Activated T-helper 2 cell treated with anti-CD3 and anti-CD28 coated beads, Interferon-gamma antibody, Interleukin-2, Interleukin-4, amounts not matched to agents 10 μg/mL and 5 μg/mL and 100 μg/mL, durations not matched to agents 14 hours and 24 hours and 36 hours (primary cell): ENCODE measurements at regions of chr20 and their contacts with region 1.

Region 1: GRCh38 chr20:62793912-62794724 is 2.2 kb upstream of the MRGBP start:
- DNase-seq: peak; percentile 97
- H3K4me3 Mint-ChIP-seq: peak overlapping the region; percentile 82
- H3K27ac Mint-ChIP-seq: peak overlapping the region; percentile 94
- H3K4me1 Mint-ChIP-seq: peaks cover 28% of the 10 kb centered on the region
- H3K27me3 Mint-ChIP-seq: no peaks in the 10 kb centered on the region

Region 2: DNA sequence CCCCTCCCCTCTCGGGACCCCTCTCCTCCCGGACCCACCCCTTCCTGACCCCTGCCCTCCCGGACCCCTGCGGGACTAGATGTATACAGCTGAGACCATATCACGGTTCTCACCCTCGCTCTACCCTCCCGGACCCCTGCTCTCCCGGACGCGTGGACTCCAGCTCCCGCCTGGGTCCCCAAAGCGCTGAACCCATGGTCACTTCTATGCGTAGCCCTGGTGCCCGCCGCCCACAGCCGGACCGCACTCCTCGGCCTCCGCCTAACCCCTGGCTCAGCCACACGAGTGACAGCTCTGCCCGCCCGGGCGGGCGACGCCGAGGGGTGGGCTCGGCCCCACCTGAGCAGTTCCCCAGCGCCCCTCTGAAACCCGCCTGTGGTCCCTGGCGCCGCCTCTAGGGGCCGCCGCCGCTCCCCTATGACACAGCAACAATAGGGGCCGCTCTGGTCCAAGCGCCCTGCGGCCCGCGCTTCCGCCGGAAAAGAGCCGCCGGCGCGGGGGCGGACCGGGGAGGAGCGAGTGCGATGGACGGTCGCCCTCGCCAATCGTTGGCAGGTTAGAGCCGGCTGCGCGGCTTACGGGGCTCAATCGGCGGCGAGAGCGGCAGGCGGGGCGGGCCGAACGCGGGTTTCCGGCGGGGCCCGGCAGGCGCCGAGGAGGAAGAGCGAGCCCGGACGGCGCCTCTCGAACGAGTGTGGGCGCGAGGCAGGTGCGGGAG is 491.6 kb before region 1 on chr20 and contains the start of gene ADRM1:
- intact Hi-C with region 1: loop called (anchors 5 kb)
- DNase-seq: peak; percentile 96
- H3K4me3 Mint-ChIP-seq: peak within 1 kb of the TSS; percentile 93
- H3K27ac Mint-ChIP-seq: peak within 1 kb of the TSS; percentile 99
- H3K4me1 Mint-ChIP-seq: peaks cover 13% of the 10 kb centered on the region
- H3K27me3 Mint-ChIP-seq: no peaks in the 10 kb centered on the region
- total RNA-seq, gene ADRM1: 152 and 171 TPM in 2 replicates

Region 3: DNA sequence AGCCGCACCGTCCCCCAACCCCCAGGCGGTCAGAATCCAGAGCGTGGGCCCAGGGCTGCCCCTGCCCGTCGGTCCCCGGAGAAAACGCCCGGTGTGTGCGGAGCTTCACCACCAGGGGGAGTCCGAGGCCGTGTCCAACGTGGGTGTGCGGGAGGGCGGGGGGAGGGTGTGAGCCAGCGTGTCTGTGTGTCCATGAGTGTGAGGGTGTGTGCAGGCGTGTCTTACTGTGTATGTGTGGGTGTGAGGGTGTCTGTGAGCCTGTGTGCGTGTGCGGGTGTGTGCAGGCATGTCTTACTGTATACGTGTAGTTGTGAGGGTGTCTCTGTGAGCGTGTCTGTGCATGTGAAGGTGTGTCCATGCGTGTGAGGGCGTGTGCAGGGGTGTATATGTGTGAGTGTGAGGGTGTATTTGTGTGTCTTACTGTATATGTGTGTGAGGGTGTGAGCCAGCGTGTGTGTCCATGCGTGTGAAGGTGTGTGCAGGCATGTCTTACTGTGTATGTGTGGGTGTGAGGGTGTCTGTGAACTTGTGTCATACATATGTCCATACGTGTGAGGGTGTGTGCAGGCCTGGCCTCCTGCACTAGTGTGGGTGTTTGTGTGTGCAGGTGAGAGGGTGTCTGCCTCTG is 293.8 kb before region 1 on chr20:
- intact Hi-C with region 1: loop called (anchors 1 kb)
- DNase-seq: peak; percentile 65
- H3K4me3 Mint-ChIP-seq: no peak overlapping the region
- H3K27ac Mint-ChIP-seq: peak overlapping the region; percentile 85
- H3K4me1 Mint-ChIP-seq: peaks cover 23% of the 10 kb centered on the region
- H3K27me3 Mint-ChIP-seq: no peaks in the 10 kb centered on the region

Region 4: GRCh38 chr20:62642040-62642665 is 152.0 kb before region 1 on chr20 and contains the start of gene SLCO4A1:
- intact Hi-C with region 1: loop called (anchors 2 kb)
- DNase-seq: peak; percentile 89
- H3K4me3 Mint-ChIP-seq: peak within 1 kb of the TSS; percentile 80
- H3K27ac Mint-ChIP-seq: peak within 1 kb of the TSS; percentile 74
- H3K4me1 Mint-ChIP-seq: peaks cover 23% of the 10 kb centered on the region
- H3K27me3 Mint-ChIP-seq: peaks cover 7% of the 10 kb centered on the region
- total RNA-seq, gene SLCO4A1: 59.2 and 61.1 TPM in 2 replicates

Region 5: GRCh38 chr20:62716198-62716940 is 77.7 kb before region 1 on chr20:
- intact Hi-C with region 1: loop called (anchors 1 kb)
- DNase-seq: peak; percentile 38
- H3K4me3 Mint-ChIP-seq: peak overlapping the region; percentile 6
- H3K27ac Mint-ChIP-seq: peak overlapping the region; percentile 51
- H3K4me1 Mint-ChIP-seq: peaks cover 18% of the 10 kb centered on the region
- H3K27me3 Mint-ChIP-seq: peaks cover 48% of the 10 kb centered on the region

Region 6: GRCh38 chr20:62776692-62777527 is 17.2 kb before region 1 on chr20:
- intact Hi-C with region 1: loop called (anchors 2 kb)
- DNase-seq: peak; percentile 57
- H3K4me3 Mint-ChIP-seq: peak overlapping the region; percentile 51
- H3K27ac Mint-ChIP-seq: peak overlapping the region; percentile 84
- H3K4me1 Mint-ChIP-seq: peaks cover 31% of the 10 kb centered on the region
- H3K27me3 Mint-ChIP-seq: no peaks in the 10 kb centered on the region

Region 7: GRCh38 chr20:62937366-62938104 is 143.4 kb after region 1 on chr20:
- intact Hi-C with region 1: loop called (anchors 5 kb)
- DNase-seq: peak; percentile 97
- H3K4me3 Mint-ChIP-seq: peak overlapping the region; percentile 90
- H3K27ac Mint-ChIP-seq: peak overlapping the region; percentile 91
- H3K4me1 Mint-ChIP-seq: peaks cover 26% of the 10 kb centered on the region
- H3K27me3 Mint-ChIP-seq: no peaks in the 10 kb centered on the region